Head of caudate nucleus (tissue), 42 donors: ENCODE measurements at regions of chr19 and their contacts with region 1.

Region 1: DNA sequence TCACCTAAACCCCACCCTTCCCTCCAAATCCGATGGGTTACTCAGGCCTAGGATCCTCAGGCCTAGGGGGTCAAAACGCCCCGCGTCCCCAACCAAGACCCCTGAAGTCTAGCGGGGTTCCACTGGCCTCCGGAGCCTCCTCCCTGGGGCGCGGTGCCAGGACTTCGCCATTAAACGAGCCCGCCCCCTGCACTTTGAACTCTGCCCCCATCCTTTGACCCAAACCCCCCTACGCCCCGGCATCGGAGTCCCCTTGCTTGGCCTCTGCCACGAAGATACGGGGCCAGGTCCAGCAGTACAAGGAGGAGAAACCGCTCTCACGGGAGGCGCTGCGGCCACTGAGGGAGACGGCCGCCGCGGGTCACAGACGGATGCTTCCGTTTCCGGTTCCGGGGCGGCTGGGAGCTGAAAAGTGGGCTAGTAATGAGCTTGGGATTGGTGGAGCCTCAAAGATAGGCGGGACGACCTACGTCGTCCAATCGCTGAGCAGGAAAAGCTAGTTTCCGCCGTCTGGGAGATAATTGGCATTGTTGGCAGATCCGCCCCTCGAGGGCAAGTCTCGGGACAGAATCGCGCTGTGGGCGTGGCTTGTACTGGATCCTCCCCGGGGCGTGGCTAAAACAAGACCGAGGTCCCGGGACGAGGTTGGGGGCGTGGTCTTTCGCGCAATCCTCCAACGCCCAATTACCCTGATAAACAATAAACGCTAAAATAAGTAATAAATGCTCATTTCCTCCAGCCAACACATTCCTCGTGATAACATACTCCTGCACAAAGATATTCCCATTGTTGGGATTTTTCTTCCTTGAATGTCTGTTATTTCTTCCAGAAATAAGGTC is 5.7 kb upstream of the ZNF77 start:
- DNase-seq: peak; percentile 99 to 100 (median 100)

Region 2: GRCh38 chr19:2977001-2977685 is 26.6 kb after region 1 on chr19 and contains the start of gene TLE6:
- intact Hi-C with region 1: no loop called
- DNase-seq: peak; percentile 86 to 98 (median 93)

Region 3: DNA sequence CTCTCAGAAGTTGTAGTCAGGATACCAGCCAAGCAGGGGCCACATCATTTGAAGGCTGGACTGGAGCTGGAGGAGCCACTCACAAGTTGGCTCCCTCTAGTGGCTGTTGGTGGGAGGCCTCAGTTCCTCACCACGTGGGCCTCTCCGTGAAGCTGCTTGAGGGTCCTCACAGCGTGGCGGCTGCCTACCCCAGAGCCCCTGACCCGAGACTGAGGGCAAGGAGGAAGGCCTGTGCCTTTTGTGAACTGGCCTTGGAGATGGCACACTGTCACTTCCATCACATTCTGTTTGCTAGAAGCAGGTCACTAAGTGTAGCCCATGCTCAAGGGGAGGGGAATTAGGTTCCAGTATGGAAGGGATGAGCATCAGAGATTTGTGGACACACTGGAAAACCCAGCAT is 158.3 kb after region 1 on chr19:
- intact Hi-C with region 1: loop called (anchors 10 kb)
- DNase-seq: peak in 40 of 42 donors; percentile 20 to 80 (median 56)

Region 4: DNA sequence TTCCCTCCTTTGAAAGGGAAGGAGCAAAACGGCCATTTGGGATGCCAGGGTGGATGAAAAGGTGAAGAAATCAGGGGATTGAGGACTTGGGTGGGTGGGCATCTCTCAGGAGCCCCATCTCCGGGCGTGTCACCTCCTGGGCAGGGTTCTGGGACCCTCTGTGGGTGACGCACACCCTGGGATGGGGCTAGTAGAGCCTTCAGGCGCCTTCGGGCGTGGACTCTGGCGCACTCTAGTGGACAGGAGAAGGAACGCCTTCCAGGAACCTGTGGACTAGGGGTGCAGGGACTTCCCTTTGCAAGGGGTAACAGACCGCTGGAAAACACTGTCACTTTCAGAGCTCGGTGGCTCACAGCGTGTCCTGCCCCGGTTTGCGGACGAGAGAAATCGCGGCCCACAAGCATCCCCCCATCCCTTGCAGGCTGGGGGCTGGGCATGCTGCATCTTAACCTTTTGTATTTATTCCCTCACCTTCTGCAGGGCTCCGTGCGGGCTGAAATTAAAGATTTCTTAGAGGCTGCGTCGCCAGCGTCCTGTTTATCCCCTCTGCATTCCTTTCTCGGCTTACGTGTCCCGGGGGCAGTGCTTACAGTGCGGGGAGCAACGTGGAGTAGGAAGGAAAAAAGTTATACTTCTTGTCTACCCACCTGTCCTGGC is 212.9 kb after region 1 on chr19:
- intact Hi-C with region 1: loop called (anchors 10 kb)
- DNase-seq: peak; percentile 40 to 85 (median 67)